Prostate gland (tissue), 2 donors: ENCODE measurements at regions of chr18 and their contacts with region 1.

Region 1: GRCh38 chr18:24567199-24567598 is 106.8 kb downstream of the HRH4 start:
- DNase-seq: no peak
- H3K4me3 ChIP-seq: no peak overlapping the region
- H3K27ac ChIP-seq: no peak overlapping the region
- H3K4me1 ChIP-seq: no peaks in the 10 kb centered on the region
- H3K27me3 ChIP-seq: no peaks in the 10 kb centered on the region
- CTCF ChIP-seq: no peak
- POLR2A ChIP-seq: no peak

Region 2: DNA sequence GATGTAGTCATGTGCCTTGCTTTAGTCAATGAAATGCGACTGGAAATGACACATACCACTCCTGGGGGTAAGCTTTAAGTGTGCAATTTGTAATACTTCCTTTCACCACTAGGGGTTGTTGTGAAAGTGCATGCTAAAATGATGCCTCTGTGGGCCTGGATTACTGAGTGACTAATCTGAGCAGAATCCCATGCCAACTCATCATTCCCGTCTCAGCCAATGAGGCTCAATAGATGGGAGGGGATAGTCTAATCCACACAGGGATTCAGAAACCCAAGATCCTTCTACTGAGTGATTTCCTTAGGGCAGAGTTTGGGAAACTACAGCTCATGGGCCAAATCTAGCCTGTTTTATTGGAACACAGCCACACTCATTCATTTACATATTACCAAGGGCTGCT is 52.8 kb before region 1 on chr18:
- intact Hi-C with region 1: loop called (anchors 10 kb)
- DNase-seq: no peak
- H3K4me3 ChIP-seq: no peak overlapping the region
- H3K27ac ChIP-seq: no peak overlapping the region
- H3K4me1 ChIP-seq: no peaks in the 10 kb centered on the region
- H3K27me3 ChIP-seq: no peaks in the 10 kb centered on the region
- CTCF ChIP-seq: peak in 1 of 4 experiments; percentile 46
- POLR2A ChIP-seq: no peak

Region 3: DNA sequence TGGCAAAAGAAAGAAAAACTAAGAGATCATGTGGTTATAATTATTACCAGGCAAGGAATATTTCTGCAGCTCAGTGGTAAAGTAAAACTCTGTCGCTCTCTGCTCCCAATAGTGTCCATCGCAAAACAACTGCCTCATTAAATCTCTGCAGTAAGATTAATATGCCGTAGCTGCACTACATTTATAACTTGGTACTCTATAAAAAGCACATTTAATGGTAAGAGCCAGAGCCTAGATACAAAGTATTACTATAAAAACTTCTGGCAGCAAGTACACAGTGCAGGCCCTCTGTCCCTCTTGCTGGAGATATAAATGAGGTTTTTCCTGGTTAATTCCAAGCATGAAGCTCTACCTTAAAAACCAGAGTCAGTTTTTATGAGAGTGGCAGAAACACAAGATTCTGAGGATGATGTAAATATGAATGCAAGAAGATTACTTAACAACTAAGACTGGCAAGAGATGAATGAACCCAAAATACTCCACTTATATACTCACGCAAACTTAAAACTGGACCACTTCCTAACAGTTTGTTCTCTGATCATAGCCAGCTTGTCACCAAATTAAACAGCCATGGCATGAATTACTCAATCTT is 759.3 kb after region 1 on chr18:
- intact Hi-C with region 1: no loop called
- DNase-seq: no peak
- H3K4me3 ChIP-seq: no peak overlapping the region
- H3K27ac ChIP-seq: no peak overlapping the region
- H3K4me1 ChIP-seq: no peaks in the 10 kb centered on the region
- H3K27me3 ChIP-seq: no peaks in the 10 kb centered on the region
- CTCF ChIP-seq: no peak
- POLR2A ChIP-seq: no peak